Upper lobe of right lung (tissue), 1 donor: ENCODE measurements at regions of chr15 and their contacts with region 1.

Region 1: DNA sequence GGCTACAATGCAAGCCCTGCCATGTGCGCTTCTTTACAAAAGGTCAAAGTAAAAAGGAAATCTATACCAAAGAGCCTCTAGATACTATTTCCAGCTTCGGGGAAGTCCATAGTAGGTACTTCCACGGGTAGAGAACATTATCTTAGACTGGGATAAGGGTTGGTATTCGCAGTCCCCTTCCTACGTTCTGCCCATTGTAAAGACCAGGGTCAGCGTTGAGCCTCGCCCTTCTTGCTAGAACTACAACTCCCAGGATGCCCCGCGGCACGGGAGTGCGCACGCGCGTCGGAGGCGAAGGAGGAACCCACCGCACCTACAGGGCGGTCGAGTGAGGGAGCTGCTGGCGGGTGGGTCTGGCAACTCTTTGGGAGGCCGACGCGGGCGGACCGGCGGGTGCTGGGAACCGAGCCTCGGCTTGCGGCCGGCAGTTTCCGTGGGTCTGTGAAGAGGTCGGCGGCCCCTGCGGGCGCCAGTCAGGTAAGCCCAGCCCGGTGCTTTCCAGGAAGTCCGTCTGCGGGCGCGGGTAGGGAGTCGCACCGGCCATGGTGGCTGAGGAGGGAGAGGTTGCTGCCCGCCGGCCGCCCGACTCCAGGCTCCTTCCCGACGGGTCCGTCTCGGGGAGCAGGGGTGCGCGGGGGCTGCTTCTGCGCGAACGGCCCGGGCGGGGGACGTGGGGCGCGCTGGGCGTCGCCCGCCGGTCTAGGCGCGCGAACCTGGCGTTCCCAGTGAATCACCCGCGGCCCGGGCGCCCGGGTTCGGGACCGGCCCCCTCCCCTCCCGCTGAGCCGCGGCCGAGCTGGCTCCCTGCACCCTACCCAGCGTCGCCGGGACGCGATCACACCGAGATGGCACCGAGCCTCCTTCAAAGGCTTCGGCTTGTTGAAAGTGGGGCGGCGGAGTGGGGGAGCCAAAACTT is at the start of gene TMOD3:
- DNase-seq: peak; percentile 97
- ATAC-seq: peak; percentile 97
- H3K4me3 ChIP-seq: peak within 1 kb of the TSS; percentile 91
- H3K27ac ChIP-seq: peak within 1 kb of the TSS; percentile 93
- H3K4me1 ChIP-seq: peaks cover 37% of the 10 kb centered on the region
- H3K27me3 ChIP-seq: no peaks in the 10 kb centered on the region
- CTCF ChIP-seq: no peak
- total RNA-seq, gene TMOD3: 78.4 TPM

Region 2: GRCh38 chr15:50940506-50940905 is 889.1 kb before region 1 on chr15:
- intact Hi-C with region 1: no loop called
- DNase-seq: no peak
- ATAC-seq: no peak
- H3K4me3 ChIP-seq: no peak overlapping the region
- H3K27ac ChIP-seq: no peak overlapping the region
- H3K4me1 ChIP-seq: no peaks in the 10 kb centered on the region
- H3K27me3 ChIP-seq: no peaks in the 10 kb centered on the region
- CTCF ChIP-seq: no peak

Region 3: DNA sequence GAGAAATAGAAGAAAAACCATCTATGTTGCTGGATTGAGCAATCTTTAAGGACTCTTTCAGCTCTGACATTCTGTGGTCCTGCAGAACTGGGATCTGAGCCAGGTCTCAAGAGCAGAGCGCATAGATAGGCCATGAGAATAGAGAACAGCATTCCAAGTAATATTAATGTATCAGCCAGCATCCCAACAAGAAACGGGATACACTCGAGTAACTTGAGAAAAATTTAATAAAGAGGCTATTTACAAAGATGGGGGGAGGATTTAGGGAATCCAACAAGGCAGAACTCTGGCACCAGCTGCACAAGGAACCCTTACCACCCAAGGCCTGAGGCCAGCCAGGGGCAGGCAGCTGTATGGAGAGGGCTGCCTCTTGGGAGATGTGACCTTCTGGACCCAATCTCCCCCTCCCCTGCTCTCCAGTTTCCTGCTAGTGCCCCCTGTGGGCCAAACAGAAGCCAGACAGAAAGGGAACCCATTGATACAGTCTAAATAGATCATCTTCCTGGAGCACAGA is 70.0 kb before region 1 on chr15:
- intact Hi-C with region 1: no loop called
- DNase-seq: peak; percentile 67
- ATAC-seq: peak; percentile 65
- H3K4me3 ChIP-seq: no peak overlapping the region
- H3K27ac ChIP-seq: no peak overlapping the region
- H3K4me1 ChIP-seq: peaks cover 7% of the 10 kb centered on the region
- H3K27me3 ChIP-seq: no peaks in the 10 kb centered on the region
- CTCF ChIP-seq: no peak

Region 4: DNA sequence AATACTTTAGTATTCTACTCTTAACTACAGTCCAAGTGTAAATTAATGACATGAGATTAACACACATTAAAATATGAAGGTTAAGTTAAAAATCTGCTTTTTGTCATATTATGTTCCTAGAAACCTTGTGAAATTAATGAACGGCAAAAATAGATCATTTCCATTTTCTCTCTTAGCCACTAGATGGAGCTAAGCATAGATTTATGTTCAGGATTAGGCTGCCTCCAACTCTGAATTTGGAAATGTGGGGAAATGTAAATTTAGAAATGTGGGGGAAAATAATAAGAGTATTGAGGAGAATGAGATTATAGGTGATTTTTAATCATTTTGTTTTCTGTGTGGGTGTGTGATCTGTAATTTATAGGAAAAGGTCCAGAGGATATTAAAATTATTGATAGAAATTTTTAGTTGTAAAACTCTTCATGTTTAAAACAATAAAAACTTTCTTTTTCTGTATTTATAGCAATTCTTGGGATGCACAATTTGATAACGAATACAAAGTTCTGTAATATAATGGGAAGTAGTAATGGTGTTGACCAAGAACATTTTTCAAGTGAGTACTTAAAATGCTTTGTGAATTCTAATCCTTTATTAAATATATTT is 59.1 kb after region 1 on chr15:
- intact Hi-C with region 1: loop called (anchors 10 kb)
- DNase-seq: no peak
- ATAC-seq: peak; percentile 46
- H3K4me3 ChIP-seq: no peak overlapping the region
- H3K27ac ChIP-seq: no peak overlapping the region
- H3K4me1 ChIP-seq: peaks cover 13% of the 10 kb centered on the region
- H3K27me3 ChIP-seq: no peaks in the 10 kb centered on the region
- CTCF ChIP-seq: peak; percentile 76

Region 5: DNA sequence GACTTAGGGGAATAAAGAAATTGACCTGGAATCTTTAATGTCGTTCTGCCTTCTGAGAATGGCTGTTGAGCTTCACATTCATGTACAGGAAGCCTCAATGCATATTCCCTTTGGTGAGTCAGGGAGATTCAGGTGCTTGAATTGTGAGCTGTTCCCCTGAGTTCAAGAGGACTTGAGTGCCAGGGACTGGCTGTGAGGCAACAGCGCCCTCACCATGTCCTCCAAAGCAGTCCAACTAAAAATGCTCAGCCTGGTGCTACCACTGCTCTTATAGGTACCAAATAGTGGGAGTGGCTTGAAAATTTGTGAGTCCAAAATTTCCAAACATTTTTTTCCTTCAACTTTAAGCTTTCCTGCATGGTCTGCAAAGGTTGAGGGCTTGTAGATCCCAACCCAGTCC is 87.9 kb after region 1 on chr15:
- intact Hi-C with region 1: no loop called
- DNase-seq: peak; percentile 65
- ATAC-seq: peak; percentile 96
- H3K4me3 ChIP-seq: no peak overlapping the region
- H3K27ac ChIP-seq: no peak overlapping the region
- H3K4me1 ChIP-seq: no peaks in the 10 kb centered on the region
- H3K27me3 ChIP-seq: no peaks in the 10 kb centered on the region
- CTCF ChIP-seq: peak; percentile 40

Region 6: GRCh38 chr15:52114261-52115055 is 284.8 kb after region 1 on chr15:
- intact Hi-C with region 1: no loop called
- DNase-seq: no peak
- ATAC-seq: no peak
- H3K4me3 ChIP-seq: no peak overlapping the region
- H3K27ac ChIP-seq: no peak overlapping the region
- H3K4me1 ChIP-seq: peaks cover 9% of the 10 kb centered on the region
- H3K27me3 ChIP-seq: peaks cover 31% of the 10 kb centered on the region
- CTCF ChIP-seq: no peak